H1 (cell line): ENCODE measurements at regions of chr18 and their contacts with region 1.

Region 1: DNA sequence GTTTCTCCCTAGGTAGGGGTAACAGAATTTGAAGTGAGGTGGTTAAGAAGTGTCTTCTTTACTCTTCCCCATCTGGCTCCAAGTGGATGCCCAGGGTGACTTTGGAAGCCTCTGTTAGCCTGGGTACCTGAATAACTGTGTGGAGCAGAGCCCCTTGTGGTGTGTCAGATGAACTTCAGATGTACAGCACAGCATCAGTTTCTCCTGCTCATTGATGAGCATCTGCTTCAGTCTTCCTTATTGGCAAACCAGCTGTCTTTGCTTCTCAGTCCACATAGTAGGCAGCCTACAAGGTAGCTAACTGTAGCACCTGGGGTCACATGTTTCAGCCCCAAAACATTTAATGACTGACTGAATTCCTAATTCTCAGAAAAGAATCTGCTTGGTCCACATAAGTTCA is 56.2 kb upstream of the ATP8B1 start:
- DNase-seq: no peak
- H3K4me3 ChIP-seq: no peak overlapping the region
- H3K27ac ChIP-seq: no peak overlapping the region
- H3K4me1 ChIP-seq: no peaks in the 10 kb centered on the region
- H3K27me3 ChIP-seq: no peaks in the 10 kb centered on the region
- CTCF ChIP-seq: peak in 2 of 3 experiments; percentile 25 to 71; a peak in 3 of 4 replicates
- EP300 ChIP-seq: no peak
- POLR2A ChIP-seq: no peak
- RAD21 ChIP-seq: peak; percentile 67 to 72

Region 2: GRCh38 chr18:57846258-57846657 is 13.1 kb before region 1 on chr18:
- CTCF ChIA-PET with region 1: interaction called, 25 read pairs
- POLR2A ChIA-PET with region 1: no interaction called
- DNase-seq: no peak
- H3K4me3 ChIP-seq: no peak overlapping the region
- H3K27ac ChIP-seq: no peak overlapping the region
- H3K4me1 ChIP-seq: no peaks in the 10 kb centered on the region
- H3K27me3 ChIP-seq: no peaks in the 10 kb centered on the region
- CTCF ChIP-seq: no peak
- EP300 ChIP-seq: no peak
- POLR2A ChIP-seq: no peak
- RAD21 ChIP-seq: no peak

Region 3: DNA sequence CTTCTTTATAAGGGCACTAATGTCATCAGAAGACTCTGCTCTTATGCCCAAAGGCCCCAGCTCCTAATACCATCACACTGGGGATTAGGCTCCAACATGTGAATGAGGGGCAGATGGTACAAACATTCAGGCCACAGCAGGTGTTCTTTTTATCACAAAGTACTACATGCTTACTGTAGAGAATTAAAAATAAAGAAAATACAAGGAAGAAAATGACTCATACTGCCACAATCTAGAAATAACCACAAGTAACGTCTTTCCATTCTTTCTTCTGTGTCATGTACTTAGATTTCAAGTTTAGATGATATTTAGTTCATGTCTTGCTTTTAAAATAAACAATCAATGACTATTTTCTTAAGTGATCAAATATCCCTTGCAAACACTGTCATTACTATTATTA is 84.4 kb after region 1 on chr18:
- CTCF ChIA-PET with region 1: no interaction called
- POLR2A ChIA-PET with region 1: no interaction called
- DNase-seq: no peak
- H3K4me3 ChIP-seq: no peak overlapping the region
- H3K27ac ChIP-seq: no peak overlapping the region
- H3K4me1 ChIP-seq: peaks cover 0 to 2% (median 0%) of the 10 kb centered on the region in 4 experiments; a peak in 3 of 7 replicates
- H3K27me3 ChIP-seq: peaks cover 0 to 2% (median 0%) of the 10 kb centered on the region in 4 experiments; a peak in 1 of 7 replicates
- CTCF ChIP-seq: no peak
- EP300 ChIP-seq: no peak
- POLR2A ChIP-seq: no peak
- RAD21 ChIP-seq: no peak